ENCODE measurements at regions of chr4 and their contacts with region 1.

Region 1: DNA sequence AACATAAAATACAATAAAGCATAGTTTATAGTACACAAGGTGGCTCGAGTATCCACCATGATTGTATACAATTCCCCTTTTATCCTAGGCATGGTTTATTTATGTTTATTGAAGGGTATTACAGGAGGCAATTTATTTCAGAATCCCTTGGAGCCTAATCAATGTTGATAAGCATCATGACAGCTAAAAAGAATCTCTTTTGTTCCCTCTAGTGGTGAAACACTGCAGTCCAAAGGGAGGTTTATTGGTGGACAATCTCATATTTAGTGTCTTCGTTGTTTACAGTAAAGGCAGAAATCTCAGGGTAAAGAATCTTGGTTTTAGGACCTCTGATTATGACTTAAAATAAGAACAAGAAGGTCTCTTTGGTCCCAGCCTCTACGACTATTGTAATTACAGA is 1712.5 kb downstream of the C4orf33 start:
- DNase-seq: peak; percentile 24
- H3K4me3 ChIP-seq: no peak overlapping the region
- H3K27ac ChIP-seq: no peak overlapping the region
- H3K4me1 ChIP-seq: no peaks in the 10 kb centered on the region
- H3K27me3 ChIP-seq: no peaks in the 10 kb centered on the region
- CTCF ChIP-seq: peak; percentile 76 to 78

Region 2: DNA sequence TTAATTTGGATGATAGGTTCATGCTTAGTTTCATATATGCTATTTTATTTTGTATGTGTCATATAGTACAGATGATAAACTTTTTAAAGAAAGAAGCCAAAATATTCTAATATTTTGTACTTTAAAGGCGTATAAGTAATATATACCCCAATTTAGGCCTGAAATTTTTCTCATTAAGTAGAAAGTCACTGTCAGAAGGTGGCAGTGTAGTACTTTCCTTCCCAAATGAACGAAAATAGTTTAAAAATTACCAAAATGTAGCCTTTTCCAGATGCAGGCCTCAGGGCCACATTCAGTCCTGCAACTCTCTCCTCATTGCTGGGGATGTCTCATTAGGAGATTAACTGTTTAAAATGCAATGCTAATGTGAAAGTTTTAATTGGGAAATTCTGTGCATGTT is 448.9 kb before region 1 on chr4:
- CTCF ChIA-PET with region 1: no interaction called
- dilution Hi-C with region 1: no loop called
- in situ Hi-C with region 1: loop called in 1 of 2 experiments (anchors 25 kb)
- intact Hi-C with region 1: loop called (anchors 1 kb)
- DNase-seq: no peak
- H3K4me3 ChIP-seq: no peak overlapping the region
- H3K27ac ChIP-seq: no peak overlapping the region
- H3K4me1 ChIP-seq: no peaks in the 10 kb centered on the region
- H3K27me3 ChIP-seq: peaks cover 2% of the 10 kb centered on the region
- CTCF ChIP-seq: peak; percentile 36 to 52

Region 3: GRCh38 chr4:130563185-130563888 is 245.2 kb before region 1 on chr4:
- CTCF ChIA-PET with region 1: no interaction called
- dilution Hi-C with region 1: no loop called
- in situ Hi-C with region 1: no loop called
- intact Hi-C with region 1: loop called (anchors 1 kb)
- DNase-seq: peak; percentile 44
- H3K4me3 ChIP-seq: peak overlapping the region; percentile 28 to 40 (median 36)
- H3K27ac ChIP-seq: no peak overlapping the region
- H3K4me1 ChIP-seq: no peaks in the 10 kb centered on the region
- H3K27me3 ChIP-seq: peaks cover 2% of the 10 kb centered on the region
- CTCF ChIP-seq: peak; percentile 41 to 58

Measured in mammary epithelial cell (primary cell).